ENCODE measurements at regions of chr10 and their contacts with region 1.

Region 1: GRCh38 chr10:91908337-91909116 is 759 bp downstream of the FGFBP3 start:
- DNase-seq: peak; percentile 89 to 92
- ATAC-seq: peak; percentile 95 to 96
- H3K4me3 ChIP-seq: peak overlapping the region; percentile 81
- H3K27ac ChIP-seq: peak overlapping the region; percentile 89 to 92
- H3K4me1 ChIP-seq: peaks cover 14% of the 10 kb centered on the region; the same call in 1 of the 3 replicates
- CTCF ChIP-seq: peak; percentile 69
- EP300 ChIP-seq: no peak
- POLR2A ChIP-seq: peak; percentile 48
- RAD21 ChIP-seq: peak; percentile 48 to 52; a peak in 4 of 5 replicates

Region 2: GRCh38 chr10:91758303-91759146 is 150.0 kb before region 1 on chr10:
- CTCF ChIA-PET with region 1: interaction called, 47 read pairs
- POLR2A ChIA-PET with region 1: interaction called, 6 read pairs
- DNase-seq: peak; percentile 31 to 78
- ATAC-seq: peak; percentile 84 to 88
- H3K4me3 ChIP-seq: no peak overlapping the region
- H3K27ac ChIP-seq: no peak overlapping the region
- H3K4me1 ChIP-seq: no peaks in the 10 kb centered on the region
- CTCF ChIP-seq: peak; percentile 83
- EP300 ChIP-seq: no peak
- POLR2A ChIP-seq: no peak
- RAD21 ChIP-seq: peak; percentile 91 to 92

Region 3: GRCh38 chr10:91856637-91857036 is 51.9 kb before region 1 on chr10:
- CTCF ChIA-PET with region 1: interaction called, 10 read pairs
- POLR2A ChIA-PET with region 1: no interaction called
- DNase-seq: peak in 1 of 2 experiments; percentile 37
- ATAC-seq: peak; percentile 47 to 51; a peak in 2 of 6 replicates
- H3K4me3 ChIP-seq: no peak overlapping the region
- H3K27ac ChIP-seq: no peak overlapping the region
- H3K4me1 ChIP-seq: no peaks in the 10 kb centered on the region
- CTCF ChIP-seq: peak; percentile 40
- EP300 ChIP-seq: no peak
- POLR2A ChIP-seq: no peak
- RAD21 ChIP-seq: peak; percentile 51 to 63

Region 4: GRCh38 chr10:91897421-91897820 is 11.1 kb before region 1 on chr10:
- CTCF ChIA-PET with region 1: interaction called, 23 read pairs
- POLR2A ChIA-PET with region 1: interaction called, 3 read pairs
- DNase-seq: no peak
- ATAC-seq: no peak
- H3K4me3 ChIP-seq: no peak overlapping the region
- H3K27ac ChIP-seq: no peak overlapping the region
- H3K4me1 ChIP-seq: peaks cover 14% of the 10 kb centered on the region
- CTCF ChIP-seq: no peak
- EP300 ChIP-seq: no peak
- POLR2A ChIP-seq: no peak
- RAD21 ChIP-seq: no peak

Region 5: DNA sequence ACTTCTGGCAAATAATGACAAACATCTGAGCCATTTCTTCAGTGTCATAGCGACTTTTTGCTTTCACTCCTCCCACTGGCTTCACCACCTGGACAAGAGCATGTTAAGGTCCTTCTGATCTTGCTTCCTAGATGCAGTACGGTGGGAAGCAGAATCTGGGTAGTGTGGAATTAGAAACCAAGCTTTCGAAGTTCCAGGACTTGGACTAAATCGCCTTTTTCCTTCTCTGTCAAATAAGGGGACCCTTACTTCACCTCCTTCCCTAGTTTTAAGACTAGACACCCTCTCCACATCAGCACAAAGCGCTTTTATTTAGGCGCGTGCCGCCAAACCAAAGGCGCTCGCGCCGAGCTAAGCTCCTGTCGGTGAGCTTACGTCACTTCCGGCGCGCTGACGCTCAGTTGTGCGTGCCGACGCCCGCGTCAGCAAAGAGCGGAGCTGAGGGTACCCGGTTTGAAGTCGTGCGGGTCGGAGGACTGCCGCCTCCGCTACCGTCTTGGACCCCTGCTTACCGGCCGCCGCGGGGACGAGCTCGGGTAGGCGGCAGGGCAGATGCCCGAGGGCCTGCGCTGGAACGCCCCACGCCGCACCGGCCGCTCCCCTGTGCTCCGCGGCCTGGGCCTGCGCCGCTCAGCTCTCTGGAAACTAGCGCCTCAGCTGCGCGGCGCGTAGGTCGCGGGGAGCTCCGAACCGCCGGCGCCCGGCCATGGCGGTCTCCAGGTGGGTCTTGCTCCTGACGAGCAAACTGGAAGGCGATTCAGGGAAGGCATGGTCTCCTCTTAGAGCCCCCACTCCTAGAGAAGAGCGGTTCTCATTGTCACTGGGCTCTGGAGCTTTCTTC is 15.1 kb after region 1 on chr10 and contains the start of gene BTAF1:
- CTCF ChIA-PET with region 1: interaction called, 17 read pairs
- POLR2A ChIA-PET with region 1: interaction called, 22 read pairs
- DNase-seq: peak; percentile 82 to 96
- ATAC-seq: peak; percentile 97 to 99
- H3K4me3 ChIP-seq: peak within 1 kb of the TSS; percentile 58
- H3K27ac ChIP-seq: peak within 1 kb of the TSS; percentile 83 to 94
- H3K4me1 ChIP-seq: peaks cover 14% of the 10 kb centered on the region; the same call in 2 of the 3 replicates
- CTCF ChIP-seq: no peak
- EP300 ChIP-seq: no peak
- POLR2A ChIP-seq: peak; percentile 94
- RAD21 ChIP-seq: no peak
- polyA plus RNA-seq, gene BTAF1: 43.6 and 54.7 TPM in 2 replicates

Measured in A549 (cell line).